T-cell (primary cell): ENCODE measurements at regions of chr6 and their contacts with region 1.

Region 1: GRCh38 chr6:32685603-32686002 is 19.1 kb upstream of the HLA-DQB1 start:
- DNase-seq: peak in 27 of 35 experiments; percentile 6 to 86 (median 41)
- ATAC-seq: peak; percentile 83 to 95 (median 91)
- H3K4me3 ChIP-seq: no peak overlapping the region
- H3K4me3 Mint-ChIP-seq: peak overlapping the region in 1 of 3 donors; percentile 18
- H3K27ac ChIP-seq: peak overlapping the region; percentile 56
- H3K27ac Mint-ChIP-seq: peak overlapping the region; percentile 41 to 77
- H3K4me1 ChIP-seq: peaks cover 3 to 11% of the 10 kb centered on the region in 2 experiments
- H3K4me1 Mint-ChIP-seq: peaks cover 11 to 45% (median 33%) of the 10 kb centered on the region in 3 donors
- H3K27me3 ChIP-seq: no peaks in the 10 kb centered on the region
- H3K27me3 Mint-ChIP-seq: no peaks in the 10 kb centered on the region

Region 2: GRCh38 chr6:32212076-32212760 is 473.4 kb before region 1 on chr6:
- CTCF ChIA-PET with region 1: no interaction called
- POLR2A ChIA-PET with region 1: no interaction called
- DNase-seq: no peak
- ATAC-seq: no peak
- H3K4me3 ChIP-seq: no peak overlapping the region
- H3K4me3 Mint-ChIP-seq: no peak overlapping the region
- H3K27ac ChIP-seq: no peak overlapping the region
- H3K27ac Mint-ChIP-seq: peak overlapping the region in 1 of 2 donors; percentile 11
- H3K4me1 ChIP-seq: no peaks in the 10 kb centered on the region
- H3K4me1 Mint-ChIP-seq: no peaks in the 10 kb centered on the region
- H3K27me3 ChIP-seq: no peaks in the 10 kb centered on the region
- H3K27me3 Mint-ChIP-seq: no peaks in the 10 kb centered on the region

Region 3: DNA sequence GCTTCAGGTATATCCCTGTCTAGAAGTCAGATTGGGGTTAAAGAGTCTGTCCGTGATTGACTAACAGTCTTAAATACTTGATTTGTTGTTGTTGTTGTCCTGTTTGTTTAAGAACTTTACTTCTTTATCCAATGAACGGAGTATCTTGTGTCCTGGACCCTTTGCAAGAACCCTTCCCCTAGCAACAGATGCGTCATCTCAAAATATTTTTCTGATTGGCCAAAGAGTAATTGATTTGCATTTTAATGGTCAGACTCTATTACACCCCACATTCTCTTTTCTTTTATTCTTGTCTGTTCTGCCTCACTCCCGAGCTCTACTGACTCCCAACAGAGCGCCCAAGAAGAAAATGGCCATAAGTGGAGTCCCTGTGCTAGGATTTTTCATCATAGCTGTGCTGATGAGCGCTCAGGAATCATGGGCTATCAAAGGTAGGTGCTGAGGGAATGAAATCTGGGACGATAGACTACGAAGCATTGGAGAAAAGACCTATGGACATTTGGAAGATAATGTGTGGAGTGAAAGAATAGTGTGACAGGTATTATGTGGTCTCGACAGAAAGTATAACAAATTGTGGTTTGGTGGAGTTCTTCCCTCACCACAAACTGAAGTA is 245.9 kb before region 1 on chr6 and contains the start of gene HLA-DRA:
- CTCF ChIA-PET with region 1: interaction called in 1 of 2 experiments, 3 read pairs
- POLR2A ChIA-PET with region 1: interaction called in 1 of 2 experiments, 17 read pairs
- DNase-seq: peak in 19 of 35 experiments; percentile 2 to 84 (median 16)
- ATAC-seq: peak; percentile 65 to 88 (median 73)
- H3K4me3 ChIP-seq: peak within 1 kb of the TSS in 1 of 2 donors; percentile 49
- H3K4me3 Mint-ChIP-seq: peak within 1 kb of the TSS; percentile 54 to 84 (median 61)
- H3K27ac ChIP-seq: peak within 1 kb of the TSS; percentile 59
- H3K27ac Mint-ChIP-seq: peak within 1 kb of the TSS; percentile 8 to 78
- H3K4me1 ChIP-seq: peaks cover 0 to 2% of the 10 kb centered on the region in 2 experiments
- H3K4me1 Mint-ChIP-seq: peaks cover 8 to 21% (median 10%) of the 10 kb centered on the region in 3 donors
- H3K27me3 ChIP-seq: no peaks in the 10 kb centered on the region
- H3K27me3 Mint-ChIP-seq: peaks cover 19 to 32% of the 10 kb centered on the region in 2 donors
- total RNA-seq, gene HLA-DRA: 41.1 to 131 (median 47.9) TPM

Region 4: DNA sequence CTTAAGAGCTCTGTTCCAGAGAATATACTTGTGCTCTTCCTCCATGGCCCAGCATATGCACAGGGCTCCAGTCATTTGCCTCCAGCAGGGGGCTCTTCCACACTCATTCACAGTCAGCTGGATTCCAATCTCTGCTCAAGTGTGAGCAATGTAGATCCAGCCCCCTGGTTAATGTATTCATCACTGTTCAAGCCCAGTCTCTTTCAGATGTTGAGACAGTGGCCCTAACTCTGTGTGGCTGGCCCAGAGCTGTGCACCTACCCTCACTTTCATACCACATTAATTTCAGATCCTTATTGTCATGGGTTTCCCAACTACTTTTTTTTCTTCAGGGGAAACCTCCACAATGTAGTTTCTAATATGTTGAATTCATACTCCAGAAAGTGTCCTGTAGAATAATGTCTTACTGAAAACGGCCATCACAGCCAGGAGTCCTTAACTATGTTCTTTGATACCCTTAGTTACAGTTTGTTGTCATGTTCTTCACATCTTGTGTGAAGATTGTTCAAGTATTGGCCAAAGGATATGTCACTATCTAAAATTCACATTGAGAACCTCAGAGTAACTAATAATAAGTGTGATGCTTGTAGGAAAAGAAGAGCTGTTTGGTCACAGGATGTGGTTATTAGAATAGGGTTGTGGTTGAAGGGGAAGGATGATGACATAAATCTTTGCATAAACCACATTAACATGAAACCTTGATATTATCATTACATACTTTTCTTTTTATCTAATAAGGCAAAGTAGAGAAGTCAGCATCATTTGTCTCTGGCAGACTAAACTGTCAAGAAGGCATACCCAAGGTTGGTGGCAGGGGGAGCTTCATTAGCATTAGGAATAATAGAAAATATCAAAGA is 62.8 kb before region 1 on chr6:
- CTCF ChIA-PET with region 1: interaction called in 1 of 2 experiments, 15 read pairs
- POLR2A ChIA-PET with region 1: no interaction called
- DNase-seq: peak in 30 of 35 experiments; percentile 6 to 88 (median 35)
- ATAC-seq: peak; percentile 79 to 86 (median 84)
- H3K4me3 ChIP-seq: no peak overlapping the region
- H3K4me3 Mint-ChIP-seq: peak overlapping the region; percentile 1 to 66 (median 12)
- H3K27ac ChIP-seq: peak overlapping the region; percentile 97
- H3K27ac Mint-ChIP-seq: peak overlapping the region; percentile 71 to 94
- H3K4me1 ChIP-seq: peaks cover 22 to 23% of the 10 kb centered on the region in 2 experiments
- H3K4me1 Mint-ChIP-seq: peaks cover 37 to 59% (median 45%) of the 10 kb centered on the region in 3 donors
- H3K27me3 ChIP-seq: no peaks in the 10 kb centered on the region
- H3K27me3 Mint-ChIP-seq: no peaks in the 10 kb centered on the region

Region 5: DNA sequence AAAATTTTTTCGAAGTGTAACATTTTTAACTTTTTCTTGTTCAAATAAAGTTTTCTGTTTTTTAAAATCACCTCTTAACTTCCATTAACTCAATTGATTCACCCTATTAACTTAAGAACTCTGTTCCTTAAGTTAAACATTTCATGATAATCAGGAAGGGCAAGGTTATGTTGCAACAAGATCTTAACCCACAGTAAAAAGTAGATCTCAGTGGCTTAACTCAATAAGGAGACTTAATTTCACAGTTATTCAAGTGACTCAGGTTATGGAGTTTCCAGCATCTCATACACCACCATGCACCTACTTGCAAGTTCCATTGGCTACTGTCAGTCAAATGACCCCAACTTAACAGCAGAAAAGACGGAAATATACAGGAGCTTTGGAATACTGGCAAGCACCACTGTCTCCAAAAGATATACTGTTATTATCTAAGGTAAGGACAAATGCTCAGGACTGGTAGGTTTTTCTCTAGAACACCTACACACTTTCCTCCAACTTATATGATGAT is 30.3 kb before region 1 on chr6:
- CTCF ChIA-PET with region 1: no interaction called
- POLR2A ChIA-PET with region 1: no interaction called
- DNase-seq: no peak
- ATAC-seq: no peak
- H3K4me3 ChIP-seq: no peak overlapping the region
- H3K4me3 Mint-ChIP-seq: no peak overlapping the region
- H3K27ac ChIP-seq: no peak overlapping the region
- H3K27ac Mint-ChIP-seq: no peak overlapping the region
- H3K4me1 ChIP-seq: no peaks in the 10 kb centered on the region
- H3K4me1 Mint-ChIP-seq: peaks cover 0 to 13% (median 0%) of the 10 kb centered on the region in 3 donors
- H3K27me3 ChIP-seq: no peaks in the 10 kb centered on the region
- H3K27me3 Mint-ChIP-seq: no peaks in the 10 kb centered on the region

Region 6: DNA sequence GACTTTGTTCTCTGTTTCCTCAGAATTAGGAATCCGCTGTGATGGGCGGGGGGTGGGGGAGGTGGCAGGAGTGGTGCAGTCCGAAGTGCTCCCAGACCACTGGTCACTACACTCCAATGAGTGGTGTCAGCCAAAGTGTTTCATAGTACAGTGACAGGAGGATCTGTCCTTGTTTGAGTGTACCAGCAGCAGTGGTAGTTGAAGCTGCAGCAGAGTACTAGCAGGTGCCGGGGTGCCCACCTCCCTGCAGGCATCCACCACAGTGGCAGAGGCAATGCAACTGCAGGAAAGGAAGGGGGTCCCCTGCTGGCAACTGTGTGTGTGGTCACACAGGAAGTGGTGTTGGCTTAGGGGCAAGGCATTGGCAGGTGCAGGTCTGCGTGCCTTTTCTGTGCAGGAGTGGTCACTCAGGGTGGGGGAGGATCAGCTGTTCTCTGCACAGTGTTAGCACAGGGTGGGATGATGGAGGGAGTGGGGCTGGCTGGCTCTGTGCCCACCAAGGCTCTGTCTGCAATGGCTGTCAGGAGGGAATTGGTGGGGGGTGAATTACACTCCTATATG is 121.5 kb after region 1 on chr6:
- CTCF ChIA-PET with region 1: no interaction called
- POLR2A ChIA-PET with region 1: no interaction called
- DNase-seq: no peak
- ATAC-seq: no peak
- H3K4me3 ChIP-seq: no peak overlapping the region
- H3K4me3 Mint-ChIP-seq: no peak overlapping the region
- H3K27ac ChIP-seq: no peak overlapping the region
- H3K27ac Mint-ChIP-seq: no peak overlapping the region
- H3K4me1 ChIP-seq: peaks cover 0 to 5% of the 10 kb centered on the region in 2 experiments
- H3K4me1 Mint-ChIP-seq: peaks cover 0 to 5% (median 4%) of the 10 kb centered on the region in 3 donors
- H3K27me3 ChIP-seq: peaks cover 0 to 9% of the 10 kb centered on the region in 2 experiments
- H3K27me3 Mint-ChIP-seq: peaks cover 33 to 51% of the 10 kb centered on the region in 2 donors